ENCODE measurements at regions of chr1 and their contacts with region 1.

Region 1: GRCh38 chr1:107782217-107782845 is 182.6 kb downstream of the VAV3 start:
- DNase-seq: no peak
- ATAC-seq: 0 out of 3 replicates have a peak, but pooled peaks have one; percentile 16
- H3K4me3 ChIP-seq: no peak overlapping the region
- H3K27ac ChIP-seq: no peak overlapping the region
- H3K4me1 ChIP-seq: peaks cover 16% of the 10 kb centered on the region; the same call in 1 of the 2 replicates
- H3K27me3 ChIP-seq: no peaks in the 10 kb centered on the region
- CTCF ChIP-seq: peak; percentile 48 to 67 (median 49); a peak in 5 of 6 replicates
- EP300 ChIP-seq: no peak
- POLR2A ChIP-seq: no peak
- RAD21 ChIP-seq: peak; percentile 96

Region 2: DNA sequence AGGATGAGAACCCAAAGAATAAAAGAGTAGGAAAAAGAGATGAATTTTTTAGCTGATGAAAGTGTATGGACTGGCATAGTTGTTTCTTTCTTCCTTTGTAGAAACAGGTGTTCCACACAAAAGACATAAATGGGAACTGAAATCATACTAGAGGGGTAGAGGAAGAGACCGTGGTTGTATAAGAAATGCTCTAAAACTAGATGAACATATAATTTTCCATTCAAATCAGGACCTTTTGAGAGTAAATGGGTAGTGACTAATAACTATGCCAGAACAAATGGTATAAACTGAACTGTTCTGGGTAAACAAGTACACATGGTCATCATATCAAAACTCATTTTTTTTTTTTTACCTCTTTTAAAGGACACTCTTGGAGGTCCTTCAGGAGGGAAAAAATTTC is 161.6 kb before region 1 on chr1:
- CTCF ChIA-PET with region 1: no interaction called
- POLR2A ChIA-PET with region 1: no interaction called
- RAD21 ChIA-PET with region 1: no interaction called
- SMC1A ChIA-PET with region 1: no interaction called
- in situ Hi-C with region 1: no loop called
- intact Hi-C with region 1: no loop called
- DNase-seq: no peak
- ATAC-seq: peak; percentile 61
- H3K4me3 ChIP-seq: no peak overlapping the region
- H3K27ac ChIP-seq: no peak overlapping the region
- H3K4me1 ChIP-seq: no peaks in the 10 kb centered on the region; the same call in 1 of the 2 replicates
- H3K27me3 ChIP-seq: no peaks in the 10 kb centered on the region
- CTCF ChIP-seq: no peak
- EP300 ChIP-seq: no peak
- POLR2A ChIP-seq: no peak
- RAD21 ChIP-seq: no peak

Region 3: DNA sequence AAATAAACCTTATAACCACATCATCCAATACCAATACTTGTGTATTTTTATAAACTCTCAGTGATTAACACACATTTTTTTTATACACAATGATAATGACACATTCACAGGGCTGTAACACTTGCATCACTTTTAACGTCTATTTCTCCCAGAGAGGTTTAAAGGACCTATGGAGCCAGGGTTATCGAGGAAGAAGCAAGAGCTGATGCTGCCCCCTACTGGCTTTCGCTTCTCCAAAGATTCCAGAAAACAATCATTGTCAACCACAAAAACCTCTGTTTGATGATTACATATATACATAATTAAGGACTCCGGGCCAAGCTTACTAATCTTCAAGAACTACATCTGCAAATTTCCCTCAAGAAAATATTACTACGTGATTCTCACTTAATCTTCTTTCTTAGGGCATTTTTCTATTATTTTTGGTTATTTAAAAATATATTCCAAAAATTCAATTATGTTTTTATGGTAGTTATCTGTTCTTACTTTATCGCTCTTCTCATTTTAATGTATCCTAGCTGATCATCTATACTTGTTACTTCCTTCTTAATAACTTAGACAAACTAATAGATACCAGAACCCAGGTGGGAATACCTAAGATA is 31.9 kb before region 1 on chr1:
- CTCF ChIA-PET with region 1: interaction called, 19 read pairs
- POLR2A ChIA-PET with region 1: interaction called, 3 read pairs
- RAD21 ChIA-PET with region 1: interaction called, 32 read pairs
- SMC1A ChIA-PET with region 1: interaction called, 41 read pairs
- in situ Hi-C with region 1: no loop called
- intact Hi-C with region 1: no loop called
- DNase-seq: peak; percentile 19
- ATAC-seq: peak; percentile 83
- H3K4me3 ChIP-seq: no peak overlapping the region
- H3K27ac ChIP-seq: no peak overlapping the region
- H3K4me1 ChIP-seq: no peaks in the 10 kb centered on the region
- H3K27me3 ChIP-seq: no peaks in the 10 kb centered on the region
- CTCF ChIP-seq: peak; percentile 53 to 68 (median 60)
- EP300 ChIP-seq: no peak
- POLR2A ChIP-seq: no peak
- RAD21 ChIP-seq: peak; percentile 71

Region 4: GRCh38 chr1:107829061-107830040 is 47.0 kb after region 1 on chr1:
- CTCF ChIA-PET with region 1: interaction called, 6 read pairs
- POLR2A ChIA-PET with region 1: no interaction called
- RAD21 ChIA-PET with region 1: interaction called, 3 read pairs
- SMC1A ChIA-PET with region 1: interaction called, 7 read pairs
- in situ Hi-C with region 1: no loop called
- intact Hi-C with region 1: loop called (anchors 5 kb)
- DNase-seq: peak; percentile 8
- ATAC-seq: peak; percentile 95
- H3K4me3 ChIP-seq: no peak overlapping the region
- H3K27ac ChIP-seq: no peak overlapping the region
- H3K4me1 ChIP-seq: peaks cover 7% of the 10 kb centered on the region
- H3K27me3 ChIP-seq: no peaks in the 10 kb centered on the region; a peak in 1 of 4 replicates
- CTCF ChIP-seq: no peak
- EP300 ChIP-seq: no peak
- POLR2A ChIP-seq: no peak
- RAD21 ChIP-seq: no peak

Region 5: DNA sequence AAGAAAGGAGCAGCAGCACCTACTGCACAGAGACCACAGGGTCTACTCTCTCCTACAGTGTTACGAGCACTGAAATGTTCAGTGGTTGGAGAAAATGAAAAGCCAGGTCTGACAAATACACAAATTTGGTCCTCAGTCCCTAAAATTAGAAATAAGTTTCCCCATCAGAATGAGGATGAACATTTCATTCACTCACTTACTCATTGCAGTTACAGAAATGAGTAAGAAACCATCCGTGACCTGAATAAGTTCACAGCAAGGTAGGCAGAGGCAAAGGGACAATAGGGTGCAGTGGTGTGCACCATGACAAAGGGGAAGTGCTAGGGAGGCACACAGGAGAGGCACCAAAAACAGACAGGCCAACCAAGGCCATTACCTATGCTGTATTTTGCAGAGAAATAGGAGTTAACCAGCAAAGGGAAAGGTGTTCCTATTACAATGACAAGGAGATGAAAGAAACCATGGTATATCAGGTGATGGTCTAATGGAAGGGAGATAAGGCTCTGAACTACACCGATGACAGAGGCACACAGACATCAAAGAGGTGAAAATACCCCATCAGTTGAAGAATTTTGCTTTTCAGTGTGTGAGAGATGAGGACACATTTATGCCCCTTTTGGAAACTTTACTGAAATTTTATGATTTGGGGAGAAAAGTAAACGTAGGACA is 153.2 kb after region 1 on chr1:
- CTCF ChIA-PET with region 1: interaction called, 8 read pairs
- POLR2A ChIA-PET with region 1: no interaction called
- RAD21 ChIA-PET with region 1: interaction called, 5 read pairs
- SMC1A ChIA-PET with region 1: interaction called, 8 read pairs
- in situ Hi-C with region 1: no loop called
- intact Hi-C with region 1: loop called (anchors 2 kb)
- DNase-seq: peak; percentile 92
- ATAC-seq: peak; percentile 91
- H3K4me3 ChIP-seq: 0 out of 2 replicates have a peak overlapping the region, but pooled peaks have one; percentile 38
- H3K27ac ChIP-seq: peak overlapping the region; percentile 77
- H3K4me1 ChIP-seq: peaks cover 35% of the 10 kb centered on the region
- H3K27me3 ChIP-seq: no peaks in the 10 kb centered on the region
- CTCF ChIP-seq: peak in 2 of 3 experiments; percentile 12 to 16; a peak in 2 of 6 replicates
- EP300 ChIP-seq: peak; percentile 88 to 99
- POLR2A ChIP-seq: no peak
- RAD21 ChIP-seq: peak; percentile 37; the same call in 1 of the 2 replicates

Region 6: DNA sequence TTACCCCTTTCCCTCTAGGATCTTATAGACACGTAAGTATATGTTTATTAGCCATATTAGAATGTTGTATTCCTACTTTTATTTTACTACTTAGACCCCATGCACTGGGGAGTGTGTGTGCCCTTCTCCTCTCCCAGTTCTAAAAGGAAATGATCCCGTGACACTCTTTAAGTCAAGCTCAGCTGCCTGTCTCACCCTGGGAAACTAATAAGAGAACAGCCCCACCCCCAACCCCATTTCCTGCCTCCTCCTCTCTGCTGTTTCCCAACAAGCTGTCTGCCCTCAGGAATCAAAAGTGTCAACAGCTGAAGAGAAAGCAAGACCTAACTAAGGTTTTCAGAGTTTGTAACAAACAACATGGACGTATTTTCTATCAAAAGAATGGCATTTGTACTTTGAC is 275.2 kb after region 1 on chr1:
- CTCF ChIA-PET with region 1: no interaction called
- POLR2A ChIA-PET with region 1: no interaction called
- RAD21 ChIA-PET with region 1: no interaction called
- SMC1A ChIA-PET with region 1: no interaction called
- in situ Hi-C with region 1: no loop called
- intact Hi-C with region 1: no loop called
- DNase-seq: no peak
- ATAC-seq: no peak
- H3K4me3 ChIP-seq: no peak overlapping the region
- H3K27ac ChIP-seq: no peak overlapping the region
- H3K4me1 ChIP-seq: no peaks in the 10 kb centered on the region
- H3K27me3 ChIP-seq: 0 out of 4 replicates have a peak, but pooled peaks cover 0 to 5% of the 10 kb centered on the region in 2 experiments
- CTCF ChIP-seq: no peak
- EP300 ChIP-seq: no peak
- POLR2A ChIP-seq: no peak
- RAD21 ChIP-seq: no peak

Region 7: GRCh38 chr1:108125312-108126138 is 343.2 kb after region 1 on chr1:
- CTCF ChIA-PET with region 1: interaction called, 568 read pairs
- POLR2A ChIA-PET with region 1: interaction called, 16 read pairs
- RAD21 ChIA-PET with region 1: interaction called, 425 read pairs
- SMC1A ChIA-PET with region 1: interaction called, 461 read pairs
- in situ Hi-C with region 1: loop called (anchors 5 kb)
- intact Hi-C with region 1: loop called (anchors 1 kb)
- DNase-seq: peak; percentile 26
- ATAC-seq: peak; percentile 98
- H3K4me3 ChIP-seq: no peak overlapping the region
- H3K27ac ChIP-seq: no peak overlapping the region
- H3K4me1 ChIP-seq: no peaks in the 10 kb centered on the region
- H3K27me3 ChIP-seq: peaks cover 0 to 3% of the 10 kb centered on the region in 2 experiments; a peak in 2 of 4 replicates
- CTCF ChIP-seq: peak; percentile 84 to 90 (median 85)
- EP300 ChIP-seq: no peak
- POLR2A ChIP-seq: no peak
- RAD21 ChIP-seq: peak; percentile 100

Region 8: DNA sequence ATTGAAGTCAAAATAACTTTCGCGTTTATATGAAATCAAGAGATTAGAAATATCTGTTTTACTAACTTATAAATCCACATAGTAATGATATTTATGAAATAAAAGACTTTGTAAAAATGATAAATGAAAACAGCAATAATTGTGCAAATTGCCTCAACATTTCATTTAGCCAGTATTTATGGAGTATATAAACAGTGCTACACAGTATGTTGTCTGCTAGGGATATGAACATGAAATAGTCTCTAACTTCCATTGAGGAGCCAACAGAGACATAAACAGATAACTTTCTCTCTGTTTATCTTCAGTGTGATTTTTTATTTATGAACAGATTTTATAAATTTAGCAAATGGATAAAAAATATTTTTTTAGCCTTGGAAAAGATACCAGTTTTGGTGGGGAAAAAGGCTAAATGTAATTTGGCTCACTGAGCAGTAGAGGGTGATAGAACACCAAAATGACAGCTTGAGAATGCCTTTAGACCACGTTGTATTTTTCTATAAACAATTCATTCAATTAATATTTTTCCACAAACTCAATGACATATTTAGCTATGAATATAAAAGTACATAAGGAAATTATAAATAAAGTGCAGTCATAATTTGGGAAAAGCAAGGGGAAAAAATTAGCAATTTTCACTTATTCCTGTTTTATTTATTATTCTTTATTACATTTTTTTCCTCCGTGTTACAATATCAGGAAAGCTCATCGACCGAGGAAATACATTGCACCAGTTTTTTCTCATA is 730.1 kb after region 1 on chr1:
- CTCF ChIA-PET with region 1: interaction called, 5 read pairs
- POLR2A ChIA-PET with region 1: no interaction called
- RAD21 ChIA-PET with region 1: no interaction called
- SMC1A ChIA-PET with region 1: interaction called, 8 read pairs
- in situ Hi-C with region 1: loop called (anchors 25 kb)
- intact Hi-C with region 1: loop called (anchors 10 kb)
- DNase-seq: no peak
- ATAC-seq: peak; percentile 61; the same call in 2 of the 3 replicates
- H3K4me3 ChIP-seq: no peak overlapping the region
- H3K27ac ChIP-seq: no peak overlapping the region
- H3K4me1 ChIP-seq: no peaks in the 10 kb centered on the region
- H3K27me3 ChIP-seq: no peaks in the 10 kb centered on the region
- CTCF ChIP-seq: peak; percentile 69 to 91 (median 76)
- EP300 ChIP-seq: no peak
- POLR2A ChIP-seq: no peak
- RAD21 ChIP-seq: peak; percentile 95